Activated naive CD4-positive, alpha-beta T cell treated with anti-CD3 and anti-CD28 coated beads for 36 hours (primary cell): ENCODE measurements at regions of chr20 and their contacts with region 1.

Region 1: DNA sequence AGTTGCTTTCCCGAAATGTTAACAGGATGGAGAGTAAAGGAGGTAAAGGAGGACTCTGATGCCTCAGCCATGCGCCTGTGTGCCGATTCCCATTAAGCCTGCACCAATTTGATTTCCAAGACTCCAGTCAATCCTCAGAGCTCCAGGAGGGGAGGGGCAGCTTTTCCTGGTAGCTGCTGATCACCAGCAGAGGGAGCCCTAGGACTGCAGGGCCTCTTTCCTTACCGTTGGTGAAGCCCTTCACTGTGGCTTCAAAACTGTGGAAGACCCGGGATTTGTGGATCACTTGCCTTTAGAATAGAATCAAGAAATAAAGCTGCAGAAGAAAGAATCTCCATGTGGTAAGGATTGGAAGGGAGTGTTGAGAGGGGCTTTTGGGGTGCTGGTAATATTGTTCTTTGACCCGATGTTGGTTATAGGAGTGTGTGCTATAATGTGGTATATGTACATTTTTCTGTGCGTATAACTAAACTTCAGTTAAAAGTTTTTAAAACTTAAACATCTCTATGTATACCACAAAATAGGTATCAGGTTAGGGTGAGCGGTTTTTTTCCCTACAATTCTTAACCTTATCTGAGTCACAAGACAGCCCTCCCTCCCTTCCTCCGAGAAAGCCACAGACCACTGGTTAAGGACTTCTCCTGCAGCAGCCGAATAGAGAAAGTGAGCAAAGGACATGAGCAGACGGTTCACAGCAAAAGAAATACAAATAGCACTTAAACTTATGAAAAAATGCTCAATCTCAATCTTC is 6.9 kb upstream of the OSER1 start:
- DNase-seq: peak; percentile 83
- H3K4me3 Mint-ChIP-seq: peak overlapping the region; percentile 65
- H3K27ac Mint-ChIP-seq: peak overlapping the region; percentile 75
- H3K4me1 Mint-ChIP-seq: peaks cover 55% of the 10 kb centered on the region
- H3K27me3 Mint-ChIP-seq: no peaks in the 10 kb centered on the region

Region 2: DNA sequence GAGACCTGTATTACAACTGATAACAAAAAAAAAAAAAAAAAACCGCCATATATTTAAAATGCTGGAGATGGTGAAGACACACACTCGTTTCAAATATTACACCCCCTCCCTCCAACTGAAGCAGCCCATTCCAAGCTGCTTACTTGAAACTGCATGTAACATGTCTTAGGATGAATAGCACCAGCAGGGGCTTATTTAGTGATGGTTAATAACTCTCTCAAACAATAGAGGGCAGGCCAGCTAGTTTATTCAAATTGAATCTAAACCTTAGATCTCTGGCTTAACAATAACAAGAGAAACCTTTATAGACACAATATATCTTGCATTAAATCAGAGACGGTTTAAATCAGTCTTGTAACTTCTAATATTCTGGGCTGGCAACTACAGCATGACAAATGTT is 21.2 kb before region 1 on chr20:
- CTCF ChIA-PET with region 1: interaction called, 11 read pairs
- intact Hi-C with region 1: no loop called
- DNase-seq: no peak
- H3K4me3 Mint-ChIP-seq: no peak overlapping the region
- H3K27ac Mint-ChIP-seq: no peak overlapping the region
- H3K4me1 Mint-ChIP-seq: peaks cover 18% of the 10 kb centered on the region
- H3K27me3 Mint-ChIP-seq: no peaks in the 10 kb centered on the region

Region 3: DNA sequence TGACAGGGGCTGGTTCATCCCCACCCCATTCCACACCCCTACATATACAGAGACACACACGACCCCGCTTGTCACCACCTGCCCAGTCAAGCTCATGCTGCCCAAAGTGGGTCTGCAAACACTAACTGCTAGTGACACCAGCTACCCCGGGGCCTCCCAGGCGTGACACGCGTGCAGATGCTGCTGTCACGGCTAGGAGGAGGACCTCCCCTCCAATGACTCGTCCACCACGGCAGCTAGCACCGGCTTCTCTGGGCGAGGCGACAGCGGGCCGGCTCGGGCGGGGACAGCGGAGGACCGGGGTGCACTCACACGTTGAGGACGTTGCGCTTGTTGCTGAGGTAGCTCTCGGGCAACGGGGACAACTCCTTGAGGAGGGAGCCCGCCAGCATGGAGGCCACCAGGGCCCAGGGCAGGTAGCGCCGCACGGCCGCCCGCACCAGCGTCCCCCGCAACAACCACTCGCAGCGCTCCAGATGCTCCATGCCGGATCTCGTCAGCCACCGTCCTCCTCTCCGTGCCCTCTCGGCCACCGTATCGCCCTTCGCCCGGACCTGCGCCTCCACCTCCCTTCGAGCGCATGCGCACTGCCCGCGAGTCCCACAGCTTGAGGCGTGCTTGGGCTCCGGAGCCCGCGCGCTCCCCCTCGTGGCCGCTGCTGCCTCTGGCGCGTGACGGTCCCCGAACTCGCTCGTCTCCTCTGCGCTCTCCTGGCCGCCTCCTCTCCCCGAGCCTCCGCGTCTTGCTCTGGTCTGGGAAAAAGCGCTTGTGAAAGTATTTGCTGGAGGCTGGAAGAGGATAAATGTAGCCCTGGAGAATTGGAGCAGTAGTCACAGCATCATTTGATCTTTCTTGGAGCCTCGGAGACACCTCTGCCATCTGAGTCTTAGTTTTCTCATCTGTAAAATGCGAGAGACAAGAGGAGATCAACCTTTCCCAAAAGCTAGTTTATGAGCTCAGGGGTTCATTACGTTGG is 93.4 kb after region 1 on chr20 and contains the start of gene FITM2:
- CTCF ChIA-PET with region 1: interaction called, 377 read pairs
- intact Hi-C with region 1: loop called (anchors 1 kb)
- DNase-seq: peak; percentile 97
- H3K4me3 Mint-ChIP-seq: peak within 1 kb of the TSS; percentile 90
- H3K27ac Mint-ChIP-seq: peak within 1 kb of the TSS; percentile 76
- H3K4me1 Mint-ChIP-seq: peaks cover 18% of the 10 kb centered on the region
- H3K27me3 Mint-ChIP-seq: no peaks in the 10 kb centered on the region
- total RNA-seq, gene FITM2: 1.7 to 2.1 TPM

Region 4: DNA sequence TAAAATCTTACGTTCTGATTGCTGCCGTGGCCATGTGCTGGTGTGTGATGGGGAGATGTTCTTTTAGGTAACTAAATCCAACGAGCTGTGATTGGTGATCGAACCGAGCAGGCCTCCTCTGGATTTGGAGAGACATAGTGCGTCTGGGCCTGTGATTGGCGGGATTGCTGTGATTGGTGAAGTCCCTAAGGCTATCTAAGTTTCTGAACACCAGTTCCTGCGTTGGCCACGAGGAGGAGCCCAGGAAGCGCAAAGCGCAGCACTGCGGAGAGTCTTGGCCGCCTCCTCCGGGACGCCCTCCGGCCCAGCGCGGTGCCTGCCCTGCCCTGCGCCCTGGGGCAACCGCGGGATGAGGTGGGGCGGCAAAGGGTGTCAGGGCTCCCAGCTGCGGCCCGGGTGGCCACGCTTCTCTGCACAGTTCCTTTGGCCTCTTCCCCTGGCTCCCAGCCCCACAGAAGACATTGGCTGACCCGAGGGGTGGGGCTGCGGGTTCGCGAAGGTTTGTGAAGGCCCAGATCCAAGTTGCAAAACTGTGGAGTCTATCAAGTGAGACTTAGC is 171.0 kb after region 1 on chr20:
- CTCF ChIA-PET with region 1: interaction called, 104 read pairs
- intact Hi-C with region 1: loop called (anchors 1 kb)
- DNase-seq: peak; percentile 90
- H3K4me3 Mint-ChIP-seq: peak overlapping the region; percentile 22
- H3K27ac Mint-ChIP-seq: no peak overlapping the region
- H3K4me1 Mint-ChIP-seq: peaks cover 11% of the 10 kb centered on the region
- H3K27me3 Mint-ChIP-seq: peaks cover 3% of the 10 kb centered on the region

Region 5: DNA sequence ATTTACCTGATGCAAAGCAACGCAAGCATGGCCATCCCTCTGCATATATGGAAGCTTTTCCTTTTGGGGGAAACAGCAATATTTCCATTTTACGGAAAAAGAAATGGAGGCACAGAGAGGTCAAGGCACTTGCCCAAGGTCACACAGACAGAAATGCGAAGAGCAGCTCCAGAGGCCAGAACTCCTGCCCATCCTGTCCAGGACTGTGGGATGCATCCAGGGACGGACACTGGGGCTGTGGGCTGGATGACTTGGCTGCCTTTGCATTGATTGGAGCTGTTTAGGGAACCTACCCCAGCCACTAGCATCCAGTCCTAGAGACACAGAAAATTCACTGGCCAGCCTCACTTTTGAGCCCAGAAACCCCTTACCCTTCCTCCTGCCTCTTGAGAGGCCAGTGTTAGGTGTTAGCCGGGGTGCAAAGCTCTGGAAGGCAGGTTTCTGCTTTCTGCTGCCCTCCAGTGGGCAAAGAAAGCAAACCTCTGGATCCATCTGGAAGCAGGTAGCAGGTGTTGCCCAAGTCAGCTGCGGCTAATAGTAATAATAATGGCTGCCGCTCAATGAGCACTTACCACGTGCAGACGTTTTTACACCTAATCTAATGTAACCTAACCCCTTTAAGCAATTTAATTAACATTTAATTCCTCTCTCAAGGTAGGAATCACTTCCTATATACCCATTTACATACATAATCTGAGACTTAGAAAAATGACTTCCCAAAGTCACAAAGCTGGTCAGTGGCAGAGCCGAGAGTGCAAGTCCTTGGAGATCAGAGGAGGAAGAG is 465.9 kb after region 1 on chr20:
- CTCF ChIA-PET with region 1: interaction called, 4 read pairs
- intact Hi-C with region 1: loop called (anchors 1 kb)
- DNase-seq: peak; percentile 72
- H3K4me3 Mint-ChIP-seq: no peak overlapping the region
- H3K27ac Mint-ChIP-seq: no peak overlapping the region
- H3K4me1 Mint-ChIP-seq: peaks cover 4% of the 10 kb centered on the region
- H3K27me3 Mint-ChIP-seq: no peaks in the 10 kb centered on the region